Mammary epithelial cell (primary cell): ENCODE measurements at regions of chr3 and their contacts with region 1.

Region 1: GRCh38 chr3:56342475-56342874 is 125.8 kb downstream of the ERC2 start:
- DNase-seq: peak; percentile 14
- H3K4me3 ChIP-seq: no peak overlapping the region
- H3K27ac ChIP-seq: no peak overlapping the region
- H3K4me1 ChIP-seq: no peaks in the 10 kb centered on the region
- H3K27me3 ChIP-seq: no peaks in the 10 kb centered on the region
- CTCF ChIP-seq: no peak

Region 2: DNA sequence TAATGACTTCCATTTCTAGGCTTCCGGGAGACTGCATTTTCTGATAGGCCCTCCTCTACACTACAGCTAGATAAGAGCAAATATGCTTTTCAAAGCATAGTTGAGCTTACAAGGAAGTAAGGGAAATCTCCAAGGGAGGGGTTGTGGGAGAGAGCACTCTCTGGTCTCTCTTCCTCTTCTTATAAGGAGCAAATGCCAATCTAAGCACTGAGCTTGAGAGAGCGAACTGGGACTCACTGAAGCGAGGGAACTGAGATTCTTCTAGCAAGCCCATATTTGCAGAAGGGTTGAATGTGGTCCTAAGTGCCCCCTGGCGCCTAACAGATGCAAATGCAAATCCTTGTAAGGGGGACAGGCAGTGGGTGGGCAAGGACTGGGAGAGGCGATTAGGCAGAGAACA is 39.0 kb before region 1 on chr3:
- CTCF ChIA-PET with region 1: no interaction called
- dilution Hi-C with region 1: no loop called
- in situ Hi-C with region 1: no loop called
- intact Hi-C with region 1: no loop called
- DNase-seq: no peak
- H3K4me3 ChIP-seq: no peak overlapping the region
- H3K27ac ChIP-seq: no peak overlapping the region
- H3K4me1 ChIP-seq: no peaks in the 10 kb centered on the region
- H3K27me3 ChIP-seq: no peaks in the 10 kb centered on the region
- CTCF ChIP-seq: peak; percentile 32 to 33

Region 3: GRCh38 chr3:56443372-56443771 is 100.9 kb after region 1 on chr3:
- CTCF ChIA-PET with region 1: no interaction called
- dilution Hi-C with region 1: no loop called
- in situ Hi-C with region 1: loop called in 1 of 2 experiments (anchors 10 kb)
- intact Hi-C with region 1: loop called (anchors 1 kb)
- DNase-seq: no peak
- H3K4me3 ChIP-seq: no peak overlapping the region
- H3K27ac ChIP-seq: no peak overlapping the region
- H3K4me1 ChIP-seq: no peaks in the 10 kb centered on the region
- H3K27me3 ChIP-seq: no peaks in the 10 kb centered on the region
- CTCF ChIP-seq: no peak

Region 4: GRCh38 chr3:56494686-56495322 is 152.3 kb after region 1 on chr3:
- CTCF ChIA-PET with region 1: no interaction called
- dilution Hi-C with region 1: no loop called
- in situ Hi-C with region 1: no loop called
- intact Hi-C with region 1: loop called (anchors 1 kb)
- DNase-seq: peak; percentile 69
- H3K4me3 ChIP-seq: no peak overlapping the region
- H3K27ac ChIP-seq: no peak overlapping the region
- H3K4me1 ChIP-seq: no peaks in the 10 kb centered on the region
- H3K27me3 ChIP-seq: no peaks in the 10 kb centered on the region
- CTCF ChIP-seq: peak; percentile 97 to 98

Region 5: DNA sequence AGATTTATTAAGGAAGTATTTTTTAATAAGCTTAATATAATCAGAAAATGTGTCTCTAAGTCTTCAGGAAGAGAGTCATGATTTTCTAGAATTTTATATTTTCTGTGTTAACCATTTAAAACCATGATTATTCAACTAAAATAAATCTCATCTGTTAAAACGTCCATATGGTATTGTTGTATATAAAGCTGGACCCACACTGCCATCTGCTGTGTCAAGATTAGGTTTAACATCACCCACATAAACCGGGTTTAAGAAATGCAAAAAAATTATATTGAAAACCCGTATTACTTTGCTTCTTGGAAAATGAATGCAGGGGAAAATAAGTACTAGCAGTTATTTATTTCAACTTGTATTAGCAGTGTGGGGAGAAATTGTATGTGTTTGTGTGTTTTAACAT is 205.0 kb after region 1 on chr3:
- CTCF ChIA-PET with region 1: no interaction called
- dilution Hi-C with region 1: no loop called
- in situ Hi-C with region 1: no loop called
- intact Hi-C with region 1: loop called (anchors 2 kb)
- DNase-seq: no peak
- H3K4me3 ChIP-seq: no peak overlapping the region
- H3K27ac ChIP-seq: no peak overlapping the region
- H3K4me1 ChIP-seq: no peaks in the 10 kb centered on the region
- H3K27me3 ChIP-seq: no peaks in the 10 kb centered on the region
- CTCF ChIP-seq: peak; percentile 1 to 33

Region 6: GRCh38 chr3:56988458-56989168 is 646.1 kb after region 1 on chr3:
- CTCF ChIA-PET with region 1: interaction called, 7 read pairs
- dilution Hi-C with region 1: no loop called
- in situ Hi-C with region 1: no loop called
- intact Hi-C with region 1: loop called (anchors 5 kb)
- DNase-seq: peak; percentile 59
- H3K4me3 ChIP-seq: no peak overlapping the region
- H3K27ac ChIP-seq: no peak overlapping the region
- H3K4me1 ChIP-seq: no peaks in the 10 kb centered on the region
- H3K27me3 ChIP-seq: no peaks in the 10 kb centered on the region
- CTCF ChIP-seq: peak; percentile 46 to 70